ENCODE measurements at regions of chr17 and their contacts with region 1.

Region 1: GRCh38 chr17:57130761-57131461 is 45.9 kb downstream of the AKAP1 start:
- DNase-seq: peak; percentile 86
- H3K4me3 ChIP-seq: peak overlapping the region; percentile 55
- H3K27ac ChIP-seq: no peak overlapping the region
- H3K4me1 ChIP-seq: peaks cover 15% of the 10 kb centered on the region
- CTCF ChIP-seq: peak; percentile 84

Region 2: DNA sequence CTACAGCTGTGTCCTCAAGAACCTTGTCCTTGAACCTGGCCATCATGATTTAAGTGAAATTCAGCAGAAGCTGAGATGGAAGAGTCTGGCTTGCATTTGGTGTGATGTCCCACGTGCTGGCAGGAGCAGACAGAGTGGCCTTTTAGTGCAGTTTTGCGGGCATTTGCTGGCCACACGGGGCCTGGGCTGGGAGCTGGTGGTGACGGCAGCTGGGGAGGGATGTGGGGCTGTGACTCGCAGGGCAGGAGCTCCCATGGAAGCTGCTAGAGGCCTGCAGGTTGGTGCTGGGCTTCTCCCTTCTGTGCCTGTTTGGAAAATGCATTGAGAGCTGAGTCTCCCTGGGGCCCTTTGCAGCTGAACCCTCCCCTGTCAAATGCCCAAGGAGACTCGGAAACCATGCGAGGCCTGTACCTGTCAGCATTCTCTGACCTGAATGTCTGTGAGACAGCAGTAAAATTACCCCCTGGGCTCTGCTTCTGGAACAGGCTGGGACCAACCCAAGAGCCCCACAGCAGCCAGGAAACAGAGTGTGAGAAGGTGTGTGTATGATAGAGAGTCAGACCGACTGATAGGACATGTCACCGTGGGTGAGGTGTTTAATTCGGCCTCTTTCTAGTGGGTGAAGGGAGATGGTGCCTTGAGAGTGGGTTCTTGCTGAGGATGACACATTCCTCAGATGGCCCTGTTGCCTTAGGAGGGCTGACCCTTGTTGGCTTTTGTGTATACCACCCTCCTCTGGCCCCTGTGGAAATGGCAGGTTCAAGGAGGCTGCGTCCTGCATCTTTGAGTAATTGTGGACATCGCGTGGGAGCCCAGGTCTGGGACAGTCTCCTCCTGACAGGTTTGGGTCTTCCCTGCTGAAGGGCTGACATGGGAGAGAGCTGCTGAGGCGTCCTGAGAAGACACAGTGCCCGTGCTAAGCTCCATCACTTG is 270.9 kb after region 1 on chr17:
- CTCF ChIA-PET with region 1: no interaction called
- POLR2A ChIA-PET with region 1: no interaction called
- intact Hi-C with region 1: loop called (anchors 5 kb)
- DNase-seq: peak; percentile 51
- H3K4me3 ChIP-seq: no peak overlapping the region
- H3K27ac ChIP-seq: no peak overlapping the region
- H3K4me1 ChIP-seq: peaks cover 53% of the 10 kb centered on the region
- CTCF ChIP-seq: peak; percentile 71

Region 3: DNA sequence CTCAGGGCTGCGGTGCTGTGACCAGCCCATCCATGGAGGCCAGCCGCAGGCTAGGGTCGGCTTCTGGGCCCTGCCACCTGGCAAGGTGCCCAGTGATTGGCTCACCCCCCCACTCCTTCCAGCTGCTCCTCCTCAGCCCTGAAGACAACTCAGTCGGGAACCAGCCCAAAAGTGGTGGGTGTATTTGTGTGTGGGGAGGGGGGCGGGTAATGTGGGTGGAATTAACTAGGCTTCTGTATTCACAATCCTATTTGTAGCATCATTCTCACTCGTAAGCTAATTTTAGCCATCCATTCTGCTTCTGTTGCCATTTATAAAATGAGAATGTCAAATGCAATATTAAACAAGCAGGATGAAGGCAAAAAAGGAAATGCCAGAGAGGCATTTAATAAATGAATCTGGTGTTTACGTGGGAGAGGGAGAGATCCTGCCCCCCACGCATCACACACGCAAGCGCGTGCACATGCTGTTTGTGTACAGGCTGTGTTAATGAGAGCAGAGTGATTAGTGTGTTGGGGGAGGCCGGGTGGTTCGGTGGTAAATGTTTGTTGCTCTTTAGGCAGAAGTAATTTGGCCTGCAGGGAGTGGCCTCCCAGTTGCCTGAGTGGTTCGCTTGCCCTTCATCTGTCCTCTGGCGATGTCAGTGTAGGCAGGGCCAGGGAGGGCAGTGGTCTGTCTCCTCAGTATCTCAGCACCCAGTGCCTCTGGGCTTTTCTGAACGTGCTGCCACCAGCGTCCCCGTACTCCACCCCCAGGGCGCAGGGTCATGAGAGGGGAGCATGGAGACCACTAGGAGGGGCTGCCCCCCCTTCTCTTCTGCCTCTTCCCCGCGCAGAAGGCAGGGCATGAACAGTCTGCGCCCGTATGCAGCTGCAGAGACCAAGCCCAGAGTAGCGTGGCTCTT is 474.1 kb after region 1 on chr17:
- CTCF ChIA-PET with region 1: no interaction called
- POLR2A ChIA-PET with region 1: no interaction called
- intact Hi-C with region 1: loop called (anchors 10 kb)
- DNase-seq: peak; percentile 92
- H3K4me3 ChIP-seq: peak overlapping the region; percentile 4
- H3K27ac ChIP-seq: peak overlapping the region; percentile 89
- H3K4me1 ChIP-seq: peaks cover 73% of the 10 kb centered on the region
- CTCF ChIP-seq: peak; percentile 67

Region 4: DNA sequence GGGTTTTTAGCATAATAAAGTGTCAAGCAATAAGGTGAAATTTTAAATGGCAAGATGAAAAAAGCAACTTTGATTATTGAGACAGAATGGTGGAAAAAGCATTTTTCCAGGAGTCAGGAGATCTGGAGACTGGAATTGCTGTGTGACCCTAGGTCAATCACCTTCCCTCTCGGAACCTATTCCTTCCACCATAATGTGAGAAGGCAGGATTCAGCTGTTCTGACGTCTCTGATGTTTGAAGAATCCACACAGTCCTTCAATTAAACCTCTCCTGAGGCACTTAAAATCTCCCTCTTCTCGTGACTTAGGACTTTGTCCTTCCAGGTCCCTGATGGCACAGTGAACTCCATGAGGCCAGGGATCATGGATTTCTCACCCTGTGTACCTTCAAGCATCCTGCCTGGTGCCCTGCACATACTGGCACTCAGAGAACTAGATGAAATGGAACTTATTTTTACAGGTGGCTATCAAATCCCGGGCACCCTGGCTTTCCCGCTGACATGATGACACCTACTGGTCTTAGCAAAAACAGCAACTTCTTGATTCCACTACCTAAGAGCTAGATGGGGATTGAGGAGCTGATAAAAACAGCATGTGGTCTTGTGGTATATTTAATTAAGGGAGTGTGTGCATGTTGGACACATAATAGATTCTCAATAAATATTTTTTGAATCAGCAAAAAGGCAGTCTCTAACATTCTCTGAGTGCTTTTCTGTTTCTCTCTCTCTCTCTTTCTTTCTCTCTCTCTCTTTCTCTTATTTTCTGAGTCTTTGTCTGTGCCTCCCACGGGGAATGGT is 616.5 kb after region 1 on chr17:
- CTCF ChIA-PET with region 1: no interaction called
- POLR2A ChIA-PET with region 1: interaction called, 3 read pairs
- intact Hi-C with region 1: loop called (anchors 2 kb)
- DNase-seq: peak; percentile 83
- H3K4me3 ChIP-seq: no peak overlapping the region
- H3K27ac ChIP-seq: no peak overlapping the region
- H3K4me1 ChIP-seq: peaks cover 24% of the 10 kb centered on the region
- CTCF ChIP-seq: peak; percentile 97

Region 5: GRCh38 chr17:57833179-57833939 is 702.4 kb after region 1 on chr17:
- CTCF ChIA-PET with region 1: no interaction called
- POLR2A ChIA-PET with region 1: no interaction called
- intact Hi-C with region 1: loop called (anchors 1 kb)
- DNase-seq: peak; percentile 75
- H3K4me3 ChIP-seq: no peak overlapping the region
- H3K27ac ChIP-seq: no peak overlapping the region
- H3K4me1 ChIP-seq: peaks cover 5% of the 10 kb centered on the region
- CTCF ChIP-seq: peak; percentile 100